ENCODE measurements at regions of chr17 and their contacts with region 1.

Region 1: GRCh38 chr17:82292251-82293154 is 19.0 kb upstream of the CSNK1D start:
- DNase-seq: peak; percentile 81
- ATAC-seq: peak; percentile 91
- H3K4me3 Mint-ChIP-seq: peak overlapping the region; percentile 87
- H3K27ac Mint-ChIP-seq: peak overlapping the region; percentile 84
- H3K4me1 Mint-ChIP-seq: peaks cover 38% of the 10 kb centered on the region
- H3K27me3 Mint-ChIP-seq: no peaks in the 10 kb centered on the region
- CTCF ChIP-seq: no peak

Region 2: DNA sequence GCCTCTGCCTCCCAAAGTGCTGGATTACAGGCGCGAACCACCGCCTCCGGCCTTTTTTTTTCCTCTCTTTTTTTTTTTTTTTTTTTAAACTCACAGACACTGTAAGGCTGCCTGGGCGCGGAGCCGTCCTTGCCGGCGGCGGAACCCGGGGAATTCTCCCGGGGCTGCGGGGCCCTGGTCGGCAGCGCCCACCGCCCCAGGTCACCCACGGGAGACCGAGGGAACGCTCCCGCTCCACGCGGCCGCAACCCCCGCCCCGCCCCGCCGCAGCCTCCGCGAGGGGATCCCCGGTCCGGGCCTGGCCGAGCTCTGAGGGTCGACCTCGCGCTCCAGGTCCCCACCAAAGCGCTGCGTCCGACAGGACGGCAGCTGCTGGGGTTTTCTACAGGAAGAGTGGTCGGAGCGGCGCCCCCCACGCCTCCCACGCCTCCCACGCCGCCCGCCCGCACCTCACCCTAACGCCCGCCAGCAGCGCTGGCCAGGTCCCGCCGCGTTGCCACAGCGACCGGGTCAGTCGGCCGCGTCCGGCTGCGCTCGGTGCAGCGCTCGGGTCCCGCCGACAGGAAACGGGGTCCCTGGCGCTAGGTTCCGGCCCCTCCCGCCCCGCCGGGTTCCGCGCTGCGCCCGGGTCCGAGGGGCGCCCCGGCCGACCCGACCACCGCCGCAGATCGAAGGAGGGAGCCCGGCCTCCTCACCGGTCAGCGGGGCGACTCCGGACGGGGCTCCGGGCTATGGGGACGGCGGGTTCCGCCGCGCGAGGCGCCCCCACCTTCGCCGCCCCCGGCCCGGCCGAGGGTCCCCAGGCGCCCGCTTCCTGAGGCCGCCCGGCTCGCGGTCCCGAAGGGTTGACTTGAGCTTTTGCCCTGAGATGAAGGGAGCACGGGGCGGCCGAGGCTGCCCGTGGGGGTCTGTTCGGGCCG is 79.9 kb before region 1 on chr17 and contains the start of gene CCDC57:
- CTCF ChIA-PET with region 1: no interaction called
- POLR2A ChIA-PET with region 1: interaction called, 28 read pairs
- intact Hi-C with region 1: loop called (anchors 2 kb)
- DNase-seq: peak; percentile 78
- ATAC-seq: peak; percentile 73
- H3K4me3 Mint-ChIP-seq: peak within 1 kb of the TSS; percentile 84
- H3K27ac Mint-ChIP-seq: peak within 1 kb of the TSS; percentile 91
- H3K4me1 Mint-ChIP-seq: peaks cover 43% of the 10 kb centered on the region
- H3K27me3 Mint-ChIP-seq: no peaks in the 10 kb centered on the region
- CTCF ChIP-seq: no peak
- total RNA-seq, gene CCDC57: 56.6 TPM in 2 replicates

Region 3: DNA sequence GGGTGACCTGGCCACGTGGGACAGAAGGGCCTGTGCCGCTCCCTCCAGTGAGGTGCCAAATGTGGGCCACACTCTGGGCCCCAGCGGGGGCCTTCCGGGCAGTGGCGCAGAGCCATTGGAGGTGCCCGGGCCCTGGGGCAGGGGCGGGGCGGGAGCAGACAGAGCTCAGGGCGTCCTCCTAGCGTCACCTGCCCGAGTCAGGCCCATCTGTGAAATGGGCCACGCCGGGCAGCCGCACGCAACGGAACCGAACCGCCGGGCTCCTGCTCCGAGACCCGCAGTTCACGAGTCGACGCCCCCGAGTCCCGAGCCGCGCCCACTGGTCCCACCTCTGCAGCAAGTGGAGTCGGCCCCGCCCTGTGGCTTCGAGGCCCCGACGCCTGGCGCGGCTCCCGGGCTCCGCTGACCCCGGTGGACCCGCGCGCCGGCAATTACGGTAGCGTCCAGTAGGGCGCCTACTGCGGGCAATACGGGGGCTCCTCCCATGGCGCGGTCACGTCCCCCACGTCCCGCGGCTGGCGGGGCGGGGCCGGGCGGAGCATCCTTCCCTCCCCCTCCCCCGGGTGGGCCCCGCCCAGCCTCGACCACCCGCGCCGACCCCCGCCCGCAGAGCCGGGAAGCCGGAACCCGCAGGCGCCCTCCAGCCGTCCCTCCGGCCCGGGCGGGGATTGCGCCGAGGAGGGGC is 61.7 kb before region 1 on chr17:
- CTCF ChIA-PET with region 1: interaction called, 6 read pairs
- POLR2A ChIA-PET with region 1: interaction called, 27 read pairs
- intact Hi-C with region 1: loop called (anchors 2 kb)
- DNase-seq: peak; percentile 68
- ATAC-seq: peak; percentile 49
- H3K4me3 Mint-ChIP-seq: peak overlapping the region; percentile 78
- H3K27ac Mint-ChIP-seq: no peak overlapping the region
- H3K4me1 Mint-ChIP-seq: peaks cover 33% of the 10 kb centered on the region
- H3K27me3 Mint-ChIP-seq: no peaks in the 10 kb centered on the region
- CTCF ChIP-seq: no peak

Region 4: GRCh38 chr17:82248815-82249674 is 43.5 kb before region 1 on chr17:
- CTCF ChIA-PET with region 1: no interaction called
- POLR2A ChIA-PET with region 1: no interaction called
- intact Hi-C with region 1: no loop called
- DNase-seq: no peak
- ATAC-seq: no peak
- H3K4me3 Mint-ChIP-seq: no peak overlapping the region
- H3K27ac Mint-ChIP-seq: no peak overlapping the region
- H3K4me1 Mint-ChIP-seq: peaks cover 13% of the 10 kb centered on the region
- H3K27me3 Mint-ChIP-seq: no peaks in the 10 kb centered on the region
- CTCF ChIP-seq: no peak

Region 5: GRCh38 chr17:82273327-82274133 is 19.0 kb before region 1 on chr17 and contains the start of gene CSNK1D:
- CTCF ChIA-PET with region 1: no interaction called
- POLR2A ChIA-PET with region 1: interaction called, 100 read pairs
- intact Hi-C with region 1: loop called (anchors 1 kb)
- DNase-seq: peak; percentile 97
- ATAC-seq: peak; percentile 83
- H3K4me3 Mint-ChIP-seq: peak within 1 kb of the TSS; percentile 94
- H3K27ac Mint-ChIP-seq: peak within 1 kb of the TSS; percentile 97
- H3K4me1 Mint-ChIP-seq: peaks cover 45% of the 10 kb centered on the region
- H3K27me3 Mint-ChIP-seq: no peaks in the 10 kb centered on the region
- CTCF ChIP-seq: no peak
- total RNA-seq, gene CSNK1D: 147 and 170 TPM in 2 replicates

Region 6: DNA sequence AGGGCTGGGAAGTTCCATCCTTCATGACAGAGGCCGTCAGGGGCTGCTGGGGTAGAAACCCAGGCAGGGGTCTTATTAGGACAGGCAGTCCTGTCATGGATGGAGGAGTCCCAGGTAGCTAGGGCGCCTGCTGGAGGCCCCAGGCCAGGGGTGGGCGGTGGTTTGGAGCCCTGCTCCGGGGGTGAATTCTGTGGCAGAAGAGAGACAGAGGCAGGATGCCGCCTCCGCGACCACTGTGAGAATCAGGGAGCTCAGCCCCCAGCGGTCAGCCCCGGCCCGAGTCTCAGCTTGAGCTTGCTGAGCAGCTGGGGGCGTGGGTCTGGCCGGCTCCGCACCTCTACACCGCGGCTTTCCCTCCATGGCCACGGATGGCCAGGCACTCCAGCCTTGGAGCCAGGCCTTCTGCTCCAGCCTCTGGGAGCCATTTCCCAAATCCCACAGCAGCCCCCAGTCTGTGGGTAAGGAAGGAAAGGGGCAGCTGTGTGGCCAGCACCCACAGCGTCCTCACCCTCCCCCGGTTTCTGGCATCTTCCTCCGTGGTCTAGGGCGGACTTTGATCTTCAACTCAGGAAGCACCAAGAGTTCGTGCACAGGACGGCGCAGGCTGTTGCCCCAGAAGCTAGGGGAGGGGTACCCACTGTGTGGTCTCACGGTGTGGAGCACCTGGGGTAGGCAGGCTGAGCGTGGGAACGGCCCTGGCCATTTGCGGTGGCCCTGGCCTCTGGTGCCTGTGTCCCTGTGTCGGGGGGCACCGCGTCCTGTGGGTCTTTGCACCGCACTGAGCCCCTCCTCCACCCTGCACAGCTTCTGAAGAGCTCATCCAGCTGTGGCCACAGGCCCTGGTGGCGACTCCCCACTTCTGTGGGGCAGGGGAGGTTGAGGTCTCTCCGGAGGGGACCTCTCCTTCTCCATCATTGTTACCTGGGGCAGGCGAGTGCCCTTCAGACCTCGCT is 10.8 kb after region 1 on chr17:
- CTCF ChIA-PET with region 1: no interaction called
- POLR2A ChIA-PET with region 1: interaction called, 35 read pairs
- intact Hi-C with region 1: no loop called
- DNase-seq: no peak
- ATAC-seq: no peak
- H3K4me3 Mint-ChIP-seq: no peak overlapping the region
- H3K27ac Mint-ChIP-seq: no peak overlapping the region
- H3K4me1 Mint-ChIP-seq: peaks cover 44% of the 10 kb centered on the region
- H3K27me3 Mint-ChIP-seq: no peaks in the 10 kb centered on the region
- CTCF ChIP-seq: no peak

Region 7: DNA sequence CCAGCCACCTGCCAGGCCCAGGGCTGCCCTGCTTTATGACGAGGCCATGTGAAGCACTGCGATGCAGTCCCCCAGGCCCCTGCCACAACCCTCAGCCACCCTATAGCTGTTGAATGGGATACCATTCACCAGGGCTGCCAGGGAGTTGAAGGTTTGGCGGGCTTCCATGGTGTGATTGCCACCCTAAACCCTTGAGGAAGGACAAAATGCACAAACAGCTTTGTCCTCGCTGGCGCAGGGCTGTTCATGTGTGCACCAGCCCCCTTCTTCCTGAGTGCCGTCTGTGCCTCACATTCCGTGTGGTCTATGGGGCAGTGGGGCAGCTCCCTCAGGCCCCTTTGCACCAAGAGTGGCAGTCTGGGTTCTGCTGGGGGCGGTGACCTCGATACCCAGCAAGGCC is 191.3 kb after region 1 on chr17:
- CTCF ChIA-PET with region 1: no interaction called
- POLR2A ChIA-PET with region 1: no interaction called
- intact Hi-C with region 1: no loop called
- DNase-seq: no peak
- ATAC-seq: no peak
- H3K4me3 Mint-ChIP-seq: no peak overlapping the region
- H3K27ac Mint-ChIP-seq: no peak overlapping the region
- H3K4me1 Mint-ChIP-seq: peaks cover 3% of the 10 kb centered on the region
- H3K27me3 Mint-ChIP-seq: no peaks in the 10 kb centered on the region
- CTCF ChIP-seq: no peak

Measured in activated B cell treated with CpG ODN at 0.5 μM for 24 hours (primary cell).